Right ventricle myocardium superior (tissue), 1 donor: ENCODE measurements at regions of chrX and their contacts with region 1.

Region 1: GRCh38 chrX:106397801-106398538 is 213.8 kb upstream of the RADX start:
- DNase-seq: no peak
- ATAC-seq: no peak

Region 2: DNA sequence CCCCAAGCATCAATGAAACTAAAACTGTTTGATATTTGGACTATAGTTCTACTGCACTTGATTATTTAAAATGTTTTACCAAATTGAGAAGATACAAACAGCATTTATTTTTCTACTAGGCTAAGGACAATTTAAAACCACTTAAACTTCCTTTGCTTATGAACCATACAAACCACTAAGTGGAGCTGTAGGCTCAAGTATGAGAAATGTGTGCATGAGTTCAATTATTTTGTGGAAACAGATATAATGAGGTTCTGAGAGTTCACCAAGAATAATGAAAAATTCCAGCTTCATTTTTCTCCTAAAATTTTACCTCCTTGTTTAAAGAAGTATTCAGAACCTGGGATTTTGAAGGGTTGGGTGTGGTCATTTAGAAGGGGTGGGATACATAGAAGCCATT is 422.6 kb before region 1 on chrX:
- intact Hi-C with region 1: loop called (anchors 10 kb)
- DNase-seq: no peak
- ATAC-seq: no peak